Activated CD8-positive, alpha-beta T cell treated with anti-CD3 and anti-CD28 coated beads, Interleukin-2, amount 10 ng/mL, durations not matched to agents 7 days and 5 days (primary cell): ENCODE measurements at regions of chr7 and their contacts with region 1.

Region 1: DNA sequence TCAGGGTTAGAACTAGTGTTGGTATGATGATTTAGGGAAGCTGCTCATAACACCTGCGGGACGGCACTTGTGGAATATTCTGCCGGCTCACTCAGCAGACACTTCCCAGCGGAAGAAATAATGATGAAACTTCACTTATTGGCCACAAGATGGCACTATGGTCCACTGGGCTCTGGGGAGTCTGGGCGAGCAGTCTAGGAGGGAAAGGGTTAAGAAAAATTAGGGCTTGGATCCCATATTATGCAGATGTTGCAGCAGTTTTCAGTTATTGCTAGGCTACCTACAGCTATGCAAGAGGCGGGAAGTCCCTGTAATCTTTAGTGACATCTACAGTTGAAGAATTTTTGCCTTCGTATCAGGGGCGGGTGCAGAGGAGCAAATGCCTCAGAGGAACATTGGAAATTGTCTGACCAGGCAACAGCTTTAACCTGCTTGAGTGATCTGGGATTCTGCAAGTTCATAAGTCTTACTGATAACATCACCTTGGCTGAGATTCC is 238.7 kb upstream of the PRSS58 start:
- DNase-seq: peak; percentile 33
- ATAC-seq: peak; percentile 59
- H3K4me3 Mint-ChIP-seq: peak overlapping the region; percentile 16
- H3K27ac Mint-ChIP-seq: no peak overlapping the region
- H3K4me1 Mint-ChIP-seq: peaks cover 47% of the 10 kb centered on the region
- H3K27me3 Mint-ChIP-seq: peaks cover 3% of the 10 kb centered on the region

Region 2: GRCh38 chr7:142506601-142507000 is 10.0 kb after region 1 on chr7:
- CTCF ChIA-PET with region 1: interaction called, 11 read pairs
- POLR2A ChIA-PET with region 1: no interaction called
- DNase-seq: no peak
- ATAC-seq: no peak
- H3K4me3 Mint-ChIP-seq: no peak overlapping the region
- H3K27ac Mint-ChIP-seq: no peak overlapping the region
- H3K4me1 Mint-ChIP-seq: peaks cover 21% of the 10 kb centered on the region
- H3K27me3 Mint-ChIP-seq: peaks cover 8% of the 10 kb centered on the region

Region 3: DNA sequence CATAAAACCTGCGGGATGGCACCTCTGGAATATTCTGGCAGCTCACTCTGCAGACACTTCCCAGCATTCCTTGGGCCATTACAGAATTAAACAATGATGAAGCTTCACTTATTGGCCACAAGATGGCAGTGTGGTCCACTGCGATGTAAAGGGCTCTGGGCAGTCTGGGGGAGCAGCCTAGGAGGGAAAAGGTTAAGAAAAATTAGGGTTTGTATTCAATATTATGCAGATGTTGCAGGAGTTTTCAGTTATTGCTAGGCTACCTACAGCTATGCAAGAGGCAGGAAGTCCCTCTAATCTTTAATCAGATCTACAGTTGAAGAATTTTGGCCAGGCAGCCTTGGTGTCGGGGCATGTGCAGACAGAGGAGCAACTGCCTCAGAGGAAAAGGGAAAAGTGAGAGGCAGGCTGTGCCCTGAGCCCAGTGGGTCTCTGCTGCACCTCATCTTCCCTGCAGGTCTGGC is 19.5 kb after region 1 on chr7:
- CTCF ChIA-PET with region 1: interaction called, 27 read pairs
- POLR2A ChIA-PET with region 1: no interaction called
- DNase-seq: peak; percentile 56
- ATAC-seq: peak; percentile 79
- H3K4me3 Mint-ChIP-seq: no peak overlapping the region
- H3K27ac Mint-ChIP-seq: no peak overlapping the region
- H3K4me1 Mint-ChIP-seq: peaks cover 31% of the 10 kb centered on the region
- H3K27me3 Mint-ChIP-seq: peaks cover 4% of the 10 kb centered on the region